ENCODE measurements at regions of chr7 and their contacts with region 1.

Region 1: GRCh38 chr7:142345811-142346210 is 88.0 kb upstream of the PRSS58 start:
- DNase-seq: no peak

Region 2: DNA sequence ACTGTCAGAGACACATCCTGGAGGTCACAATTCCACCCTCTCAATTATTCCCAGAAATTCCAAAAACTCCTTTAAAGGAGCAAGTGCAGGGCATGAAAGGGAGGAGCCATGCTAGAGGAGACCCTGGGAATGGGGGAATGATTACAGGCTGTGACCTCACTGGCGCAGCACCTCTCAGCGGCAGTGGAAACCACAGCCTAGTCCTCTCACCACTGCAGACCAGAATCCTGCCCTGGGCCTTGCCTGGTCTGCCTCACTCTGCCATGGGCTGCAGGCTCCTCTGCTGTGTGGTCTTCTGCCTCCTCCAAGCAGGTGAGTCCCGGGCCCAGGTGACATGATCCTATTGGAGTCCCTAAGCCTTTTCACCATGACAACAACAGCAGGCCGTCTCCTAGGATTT is 37.5 kb before region 1 on chr7:
- intact Hi-C with region 1: loop called (anchors 2 kb)
- DNase-seq: peak; percentile 74